ENCODE measurements at regions of chr3 and their contacts with region 1.

Region 1: DNA sequence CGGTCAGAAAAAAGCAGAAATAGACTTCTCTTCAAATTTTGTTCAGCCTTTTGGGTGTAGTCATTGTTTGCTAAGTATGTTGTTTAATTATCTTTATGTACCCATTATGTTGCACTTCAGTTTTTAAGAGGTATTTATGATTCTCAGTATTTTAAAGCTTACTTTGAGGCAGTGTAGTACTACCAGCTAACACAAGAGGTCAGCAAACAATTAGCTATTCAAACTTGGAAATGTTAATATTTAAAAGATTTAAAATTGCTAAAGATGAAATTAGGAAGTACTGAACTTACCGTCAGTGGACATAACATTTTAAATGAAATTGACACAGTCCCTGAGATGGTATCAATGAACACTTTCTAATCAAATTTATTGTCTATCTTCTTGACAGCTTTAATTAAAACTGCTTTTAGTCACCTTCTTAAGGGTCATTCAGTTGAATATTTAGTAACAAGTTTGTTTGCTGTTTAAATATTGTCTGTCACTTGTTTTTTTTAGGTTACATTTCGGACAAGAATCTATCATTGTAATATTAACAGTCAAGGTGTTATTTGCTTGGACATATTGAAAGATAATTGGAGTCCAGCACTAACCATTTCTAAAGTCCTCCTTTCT is 28.1 kb downstream of the NKIRAS1 start:
- DNase-seq: no peak
- ATAC-seq: no peak
- H3K4me3 Mint-ChIP-seq: no peak overlapping the region
- H3K27ac Mint-ChIP-seq: no peak overlapping the region
- H3K4me1 Mint-ChIP-seq: no peaks in the 10 kb centered on the region
- H3K27me3 Mint-ChIP-seq: no peaks in the 10 kb centered on the region

Region 2: DNA sequence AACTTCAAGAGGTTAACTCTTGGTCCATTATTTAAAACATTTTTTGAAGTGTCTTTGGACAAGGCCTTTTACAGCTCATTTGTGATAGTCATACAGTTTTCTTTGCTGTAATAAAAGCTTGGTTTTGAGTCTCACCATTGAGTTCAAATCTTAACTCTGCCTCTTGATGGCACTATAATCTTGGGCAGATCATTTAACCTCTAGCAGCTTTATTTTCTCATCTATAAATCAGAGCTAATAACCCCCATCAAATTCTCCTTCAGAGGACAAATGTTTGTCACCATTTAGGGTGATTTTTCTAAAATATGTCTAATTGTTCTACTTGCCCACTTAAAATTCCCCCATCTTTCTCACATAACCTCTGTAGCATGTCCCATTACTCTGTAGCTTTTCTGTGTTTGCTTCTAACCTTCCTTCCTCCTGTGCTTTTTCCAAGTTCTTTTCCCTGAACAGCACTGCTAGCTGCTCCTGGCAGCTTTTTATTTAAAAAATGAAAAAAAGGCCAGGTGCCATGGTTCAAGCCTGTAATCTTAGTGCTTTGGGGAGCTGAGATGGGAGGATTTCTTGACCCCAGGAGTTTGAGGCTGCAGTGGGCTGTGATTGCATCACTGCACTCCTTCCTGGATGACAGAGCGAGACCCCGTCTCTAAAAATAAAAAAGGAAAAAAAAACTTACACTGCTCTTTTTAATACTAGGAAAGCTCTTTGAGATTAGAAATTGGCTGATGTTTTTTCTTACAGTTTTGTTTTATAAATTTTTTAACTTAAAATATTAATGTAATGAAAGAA is 54.4 kb before region 1 on chr3:
- CTCF ChIA-PET with region 1: interaction called, 11 read pairs
- POLR2A ChIA-PET with region 1: no interaction called
- DNase-seq: no peak
- ATAC-seq: no peak
- H3K4me3 Mint-ChIP-seq: no peak overlapping the region
- H3K27ac Mint-ChIP-seq: no peak overlapping the region
- H3K4me1 Mint-ChIP-seq: peaks cover 18% of the 10 kb centered on the region
- H3K27me3 Mint-ChIP-seq: no peaks in the 10 kb centered on the region

Region 3: GRCh38 chr3:23900744-23901143 is 12.0 kb after region 1 on chr3:
- CTCF ChIA-PET with region 1: interaction called, 10 read pairs
- POLR2A ChIA-PET with region 1: no interaction called
- DNase-seq: no peak
- ATAC-seq: no peak
- H3K4me3 Mint-ChIP-seq: no peak overlapping the region
- H3K27ac Mint-ChIP-seq: no peak overlapping the region
- H3K4me1 Mint-ChIP-seq: no peaks in the 10 kb centered on the region
- H3K27me3 Mint-ChIP-seq: no peaks in the 10 kb centered on the region

Region 4: GRCh38 chr3:23968463-23969184 is 79.9 kb after region 1 on chr3:
- CTCF ChIA-PET with region 1: no interaction called
- POLR2A ChIA-PET with region 1: no interaction called
- DNase-seq: no peak
- ATAC-seq: no peak
- H3K4me3 Mint-ChIP-seq: no peak overlapping the region
- H3K27ac Mint-ChIP-seq: no peak overlapping the region
- H3K4me1 Mint-ChIP-seq: no peaks in the 10 kb centered on the region
- H3K27me3 Mint-ChIP-seq: no peaks in the 10 kb centered on the region